ENCODE measurements at regions of chr17 and their contacts with region 1.

Region 1: DNA sequence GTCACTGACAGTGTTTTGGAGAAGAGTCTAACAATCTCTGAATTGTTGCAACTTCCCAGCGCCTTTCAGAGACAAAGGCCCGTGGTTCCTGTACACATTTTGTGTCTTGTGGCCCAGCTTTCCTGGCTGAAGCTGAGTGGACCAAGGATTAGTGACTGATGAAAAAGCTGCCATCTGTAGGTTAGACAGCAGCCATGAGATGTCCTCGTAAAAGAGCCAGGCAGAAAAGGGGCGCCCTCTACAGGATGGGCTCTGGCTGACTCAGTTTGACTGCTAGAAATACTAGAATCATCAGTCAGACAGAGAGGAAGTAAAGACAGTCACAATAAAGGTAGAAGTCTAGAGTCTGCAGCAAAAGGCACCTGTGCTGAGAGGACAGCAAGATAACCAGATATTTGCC is 26.5 kb upstream of the NF1 start:
- DNase-seq: peak; percentile 47 to 78 (median 71)
- H3K4me3 ChIP-seq: no peak overlapping the region
- H3K4me3 Mint-ChIP-seq: no peak overlapping the region
- H3K27ac ChIP-seq: peak overlapping the region; percentile 19 to 69
- H3K27ac Mint-ChIP-seq: peak overlapping the region; percentile 62 to 83 (median 76)
- H3K4me1 ChIP-seq: peaks cover 20% of the 10 kb centered on the region in 2 donors
- H3K4me1 Mint-ChIP-seq: peaks cover 21% of the 10 kb centered on the region
- H3K27me3 ChIP-seq: no peaks in the 10 kb centered on the region
- H3K27me3 Mint-ChIP-seq: peaks cover 0 to 2% (median 0%) of the 10 kb centered on the region in 3 donors
- CTCF ChIP-seq: peak; percentile 69

Region 2: DNA sequence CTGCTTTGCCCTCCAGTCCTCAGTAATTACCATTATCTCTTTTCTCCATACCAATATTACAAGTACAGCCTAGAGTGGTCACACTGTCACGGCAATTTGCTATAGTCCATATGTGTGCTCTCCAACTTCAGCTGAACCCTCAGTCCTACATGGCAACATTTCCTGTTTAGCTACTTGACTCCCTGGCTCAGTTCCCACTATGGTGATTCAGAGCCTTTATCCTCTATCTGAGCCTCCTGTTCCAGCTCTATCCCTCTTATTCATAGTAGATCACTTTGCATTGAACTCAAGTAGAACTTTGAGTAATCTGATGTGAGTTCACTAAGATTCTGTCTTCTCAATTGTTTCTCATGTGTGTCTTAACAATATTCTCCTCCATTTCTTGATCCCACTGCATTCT is 634.8 kb before region 1 on chr17:
- intact Hi-C with region 1: no loop called
- DNase-seq: peak; percentile 16 to 41 (median 39)
- H3K4me3 ChIP-seq: no peak overlapping the region
- H3K4me3 Mint-ChIP-seq: no peak overlapping the region
- H3K27ac ChIP-seq: peak overlapping the region in 1 of 2 donors; percentile 2
- H3K27ac Mint-ChIP-seq: peak overlapping the region in 5 of 7 donors; percentile 2 to 51 (median 33)
- H3K4me1 ChIP-seq: peaks cover 5% of the 10 kb centered on the region in 2 donors
- H3K4me1 Mint-ChIP-seq: peaks cover 12% of the 10 kb centered on the region
- H3K27me3 ChIP-seq: no peaks in the 10 kb centered on the region
- H3K27me3 Mint-ChIP-seq: no peaks in the 10 kb centered on the region
- CTCF ChIP-seq: no peak

Region 3: GRCh38 chr17:31015639-31016038 is 52.7 kb before region 1 on chr17:
- intact Hi-C with region 1: loop called in 1 of 2 experiments (anchors 10 kb)
- DNase-seq: no peak
- H3K4me3 ChIP-seq: no peak overlapping the region
- H3K4me3 Mint-ChIP-seq: no peak overlapping the region
- H3K27ac ChIP-seq: no peak overlapping the region
- H3K27ac Mint-ChIP-seq: no peak overlapping the region
- H3K4me1 ChIP-seq: no peaks in the 10 kb centered on the region
- H3K4me1 Mint-ChIP-seq: peaks cover 1% of the 10 kb centered on the region
- H3K27me3 ChIP-seq: no peaks in the 10 kb centered on the region
- H3K27me3 Mint-ChIP-seq: peaks cover 0 to 1% (median 0%) of the 10 kb centered on the region in 3 donors
- CTCF ChIP-seq: no peak

Region 4: DNA sequence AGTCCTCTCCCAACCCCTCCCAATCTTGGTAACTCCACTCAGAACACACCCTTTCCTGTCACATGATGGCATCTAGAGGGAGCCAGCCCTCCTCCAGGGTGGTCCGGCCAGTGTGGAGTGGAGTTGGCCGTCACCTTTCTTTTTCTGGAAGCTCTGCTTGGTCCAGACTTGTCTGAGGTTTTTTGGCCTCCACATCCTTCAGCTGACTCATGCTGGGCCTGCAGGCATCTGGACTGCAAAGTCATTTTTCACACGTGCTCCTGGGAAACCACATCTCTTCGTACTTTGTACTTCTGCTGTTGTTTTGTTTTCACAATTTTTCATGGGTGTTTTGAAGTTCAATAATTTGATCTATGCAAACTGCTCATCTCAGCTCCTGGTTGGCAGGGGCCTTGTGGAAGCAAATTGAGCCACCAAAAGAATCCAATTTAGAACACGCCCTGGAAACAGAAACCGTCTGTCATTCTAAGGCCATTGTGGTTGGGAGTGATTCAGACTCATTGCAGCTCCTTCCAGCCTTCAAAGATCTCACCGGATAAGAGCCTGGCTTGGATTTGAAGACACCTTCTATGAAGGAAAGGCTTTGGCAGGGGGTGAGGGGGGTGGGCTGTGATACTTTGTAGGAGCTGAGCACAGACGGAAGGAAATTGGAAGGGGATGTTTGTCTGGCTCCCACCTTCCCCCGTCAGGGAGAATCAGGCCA is 16.0 kb before region 1 on chr17:
- intact Hi-C with region 1: loop called in 1 of 2 experiments (anchors 2 kb)
- DNase-seq: peak; percentile 67 to 82 (median 67)
- H3K4me3 ChIP-seq: peak overlapping the region in 1 of 3 experiments; percentile 29
- H3K4me3 Mint-ChIP-seq: peak overlapping the region; percentile 28 to 76
- H3K27ac ChIP-seq: peak overlapping the region; percentile 73 to 92
- H3K27ac Mint-ChIP-seq: peak overlapping the region; percentile 92 to 98 (median 96)
- H3K4me1 ChIP-seq: peaks cover 32 to 33% of the 10 kb centered on the region in 2 donors
- H3K4me1 Mint-ChIP-seq: peaks cover 31% of the 10 kb centered on the region
- H3K27me3 ChIP-seq: no peaks in the 10 kb centered on the region
- H3K27me3 Mint-ChIP-seq: no peaks in the 10 kb centered on the region
- CTCF ChIP-seq: no peak